GM23248 (cell line): ENCODE measurements at regions of chr13 and their contacts with region 1.

Region 1: GRCh38 chr13:35621989-35622388 is 145.5 kb upstream of the MAB21L1 start:
- DNase-seq: peak; percentile 72
- H3K4me3 ChIP-seq: no peak overlapping the region
- H3K27ac ChIP-seq: 0 out of 2 replicates have a peak overlapping the region, but pooled peaks have one; percentile 0
- H3K4me1 ChIP-seq: peaks cover 10% of the 10 kb centered on the region; the same call in 1 of the 2 replicates
- H3K27me3 ChIP-seq: no peaks in the 10 kb centered on the region

Region 2: GRCh38 chr13:35684432-35684831 is 62.4 kb after region 1 on chr13:
- in situ Hi-C with region 1: no loop called
- DNase-seq: no peak
- H3K4me3 ChIP-seq: no peak overlapping the region
- H3K27ac ChIP-seq: no peak overlapping the region
- H3K4me1 ChIP-seq: no peaks in the 10 kb centered on the region
- H3K27me3 ChIP-seq: no peaks in the 10 kb centered on the region

Region 3: GRCh38 chr13:35789335-35790165 is 167.6 kb after region 1 on chr13:
- in situ Hi-C with region 1: loop called (anchors 10 kb)
- DNase-seq: peak; percentile 66
- H3K4me3 ChIP-seq: no peak overlapping the region
- H3K27ac ChIP-seq: no peak overlapping the region
- H3K4me1 ChIP-seq: peaks cover 30% of the 10 kb centered on the region
- H3K27me3 ChIP-seq: no peaks in the 10 kb centered on the region

Region 4: GRCh38 chr13:36074659-36075058 is 452.7 kb after region 1 on chr13:
- in situ Hi-C with region 1: no loop called
- DNase-seq: no peak
- H3K4me3 ChIP-seq: no peak overlapping the region
- H3K27ac ChIP-seq: no peak overlapping the region
- H3K4me1 ChIP-seq: no peaks in the 10 kb centered on the region
- H3K27me3 ChIP-seq: peaks cover 3% of the 10 kb centered on the region; the same call in 1 of the 2 replicates

Region 5: GRCh38 chr13:36345438-36346221 is 723.6 kb after region 1 on chr13:
- in situ Hi-C with region 1: no loop called
- DNase-seq: peak; percentile 94
- H3K4me3 ChIP-seq: peak overlapping the region; percentile 93
- H3K27ac ChIP-seq: peak overlapping the region; percentile 100
- H3K4me1 ChIP-seq: peaks cover 37% of the 10 kb centered on the region
- H3K27me3 ChIP-seq: no peaks in the 10 kb centered on the region